ENCODE measurements at regions of chr17 and their contacts with region 1.

Region 1: GRCh38 chr17:61144741-61145564 is 254.7 kb upstream of the TBX2 start:
- DNase-seq: no peak
- H3K4me3 Mint-ChIP-seq: no peak overlapping the region
- H3K27ac Mint-ChIP-seq: no peak overlapping the region
- H3K4me1 Mint-ChIP-seq: peaks cover 23% of the 10 kb centered on the region
- H3K27me3 Mint-ChIP-seq: no peaks in the 10 kb centered on the region

Region 2: GRCh38 chr17:61009663-61010062 is 135.3 kb before region 1 on chr17:
- intact Hi-C with region 1: loop called (anchors 10 kb)
- DNase-seq: no peak
- H3K4me3 Mint-ChIP-seq: no peak overlapping the region
- H3K27ac Mint-ChIP-seq: no peak overlapping the region
- H3K4me1 Mint-ChIP-seq: peaks cover 7% of the 10 kb centered on the region
- H3K27me3 Mint-ChIP-seq: no peaks in the 10 kb centered on the region

Region 3: DNA sequence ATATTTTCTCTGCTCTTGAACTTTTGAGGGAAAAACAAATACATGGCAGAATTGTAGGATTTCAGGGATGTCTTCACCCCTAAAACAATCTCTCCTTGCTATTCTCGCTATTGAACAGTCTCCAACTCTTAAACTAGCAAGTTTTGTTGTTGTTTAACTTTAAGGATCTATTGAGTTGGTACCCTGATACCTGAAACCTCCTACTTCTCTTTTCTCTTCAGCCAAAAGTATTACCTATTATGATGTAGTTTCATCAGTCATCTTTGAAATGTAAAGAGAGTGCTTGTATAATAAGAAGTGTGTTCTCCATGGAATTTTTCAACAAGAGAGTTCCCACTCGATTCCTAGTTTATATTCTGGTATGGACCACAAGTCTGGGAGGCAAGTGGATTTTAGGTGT is 43.1 kb after region 1 on chr17:
- intact Hi-C with region 1: no loop called
- DNase-seq: no peak
- H3K4me3 Mint-ChIP-seq: no peak overlapping the region
- H3K27ac Mint-ChIP-seq: no peak overlapping the region
- H3K4me1 Mint-ChIP-seq: peaks cover 7% of the 10 kb centered on the region
- H3K27me3 Mint-ChIP-seq: peaks cover 9% of the 10 kb centered on the region

Measured in activated T-helper 2 cell treated with anti-CD3 and anti-CD28 coated beads, Interferon-gamma antibody, Interleukin-2, Interleukin-4, amounts not matched to agents 10 μg/mL and 5 μg/mL and 100 μg/mL, durations not matched to agents 14 hours and 24 hours and 36 hours (primary cell).